HepG2 (cell line): ENCODE measurements at regions of chr1 and their contacts with region 1.

Region 1: DNA sequence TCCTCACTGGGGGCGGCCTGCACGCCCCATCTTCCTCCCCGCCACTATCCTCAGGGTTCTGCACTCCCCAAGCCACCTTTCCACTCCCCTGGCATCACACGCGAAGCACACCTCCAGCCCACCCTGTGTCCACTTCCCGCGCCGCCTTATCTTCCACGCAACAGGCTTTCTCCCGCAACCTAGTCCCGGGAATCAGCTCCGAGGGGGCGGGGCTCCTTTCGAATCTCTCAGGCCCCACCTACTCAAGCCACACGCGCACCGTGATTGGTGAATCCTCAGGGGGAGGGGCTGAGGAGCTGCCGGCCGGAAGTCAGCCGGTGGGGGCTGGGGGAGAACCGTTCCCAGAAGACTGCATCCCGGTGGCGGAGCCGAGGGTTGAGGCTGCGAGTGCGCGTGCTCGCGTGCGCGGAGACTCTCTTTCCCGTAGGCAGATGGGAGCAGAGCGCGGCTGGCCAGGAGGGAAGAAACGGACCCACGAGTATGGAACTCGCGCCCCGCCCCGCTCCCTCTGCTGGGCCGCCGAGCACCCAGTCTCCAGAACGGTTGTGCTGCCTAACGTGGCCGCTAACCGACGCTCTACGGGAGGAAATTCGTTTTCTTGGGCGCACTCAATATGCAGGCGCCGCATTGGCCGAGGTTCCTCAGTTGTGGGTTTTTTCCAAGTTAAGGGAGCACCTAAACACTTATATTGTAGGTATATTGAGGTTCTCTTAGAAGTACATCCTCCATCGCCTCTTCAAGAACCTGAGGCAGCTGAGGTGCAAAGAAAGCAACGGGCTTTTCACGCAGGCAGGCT is at the start of gene PSRC1:
- DNase-seq: peak; percentile 90
- ATAC-seq: peak; percentile 95
- H3K4me3 ChIP-seq: peak within 1 kb of the TSS; percentile 75 to 99 (median 93)
- H3K27ac ChIP-seq: peak within 1 kb of the TSS; percentile 85
- H3K4me1 ChIP-seq: peaks cover 52% of the 10 kb centered on the region
- H3K27me3 ChIP-seq: no peaks in the 10 kb centered on the region; a peak in 1 of 5 replicates
- CTCF ChIP-seq: peak; percentile 59
- EP300 ChIP-seq: 0 out of 4 replicates have a peak, but pooled peaks of 1 of the 2 experiments have one; percentile 10
- POLR2A ChIP-seq: peak; percentile 79 to 92
- RAD21 ChIP-seq: peak; percentile 73
- total RNA-seq, gene PSRC1: 26.5 and 28.6 TPM in 2 replicates

Region 2: DNA sequence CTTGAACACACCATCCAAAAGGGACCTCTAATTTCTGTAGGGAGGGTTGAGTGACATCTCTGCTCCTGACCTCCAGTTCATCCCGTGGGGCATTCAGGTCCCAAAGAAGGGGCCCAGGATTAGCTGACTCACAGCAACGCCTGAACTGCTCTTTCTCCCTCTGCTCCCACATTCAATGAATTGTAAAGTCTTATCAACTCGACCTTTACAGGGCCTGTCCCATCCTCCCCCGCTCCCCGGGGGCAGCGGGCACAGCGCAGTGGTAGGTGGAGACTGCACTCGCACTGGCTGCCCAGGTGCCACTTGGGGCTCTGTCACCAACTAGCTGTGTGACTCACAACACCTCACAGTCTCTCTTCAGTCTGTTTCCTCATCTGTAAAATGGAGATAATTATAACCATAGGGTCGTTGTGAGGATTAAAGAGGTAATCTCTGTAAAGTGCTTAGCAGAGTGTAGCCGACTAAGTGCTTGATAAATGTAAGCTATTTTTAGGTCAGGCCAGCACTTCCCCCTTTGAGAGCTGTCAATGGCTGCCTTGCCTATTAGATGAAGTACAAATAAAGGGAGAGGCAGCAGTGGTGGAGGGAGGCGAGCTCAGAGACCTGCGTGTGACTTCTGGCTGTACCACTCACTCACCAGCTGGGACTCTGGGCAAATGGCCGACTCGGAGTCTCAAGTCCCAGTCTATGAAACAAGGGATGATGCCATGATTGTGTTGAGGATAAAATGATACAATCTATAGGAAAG is 24.3 kb after region 1 on chr1:
- CTCF ChIA-PET with region 1: no interaction called
- POLR2A ChIA-PET with region 1: interaction called, 21 read pairs
- in situ Hi-C with region 1: no loop called
- intact Hi-C with region 1: no loop called
- DNase-seq: peak; percentile 34
- ATAC-seq: peak; percentile 28
- H3K4me3 ChIP-seq: peak overlapping the region in 2 of 3 experiments; percentile 36 to 62; a peak in 3 of 6 replicates
- H3K27ac ChIP-seq: peak overlapping the region; percentile 24
- H3K4me1 ChIP-seq: peaks cover 87% of the 10 kb centered on the region
- H3K27me3 ChIP-seq: no peaks in the 10 kb centered on the region
- CTCF ChIP-seq: no peak
- EP300 ChIP-seq: no peak
- POLR2A ChIP-seq: no peak
- RAD21 ChIP-seq: no peak